Posterior cingulate gyrus (tissue), 11 donors: ENCODE measurements at regions of chr10 and their contacts with region 1.

Region 1: DNA sequence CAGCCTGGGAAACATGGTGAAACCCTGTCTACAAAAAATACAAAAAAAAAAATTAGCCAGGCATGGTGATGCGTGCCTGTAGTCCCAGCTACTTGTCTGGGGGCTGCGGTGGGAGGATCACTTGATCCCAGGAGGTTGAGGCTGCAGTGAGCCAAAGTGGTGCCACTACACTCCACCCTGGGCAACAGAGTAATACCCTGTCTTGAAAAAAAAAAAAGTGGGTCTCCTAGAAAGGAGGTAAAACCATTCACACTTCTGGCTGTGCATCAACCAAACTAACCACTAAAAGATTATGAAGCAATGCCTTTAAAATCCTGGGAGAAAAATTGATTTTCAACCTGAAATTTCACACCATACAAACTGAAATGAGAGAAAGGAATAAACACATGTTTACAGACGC is 35.4 kb upstream of the C10orf71 start:
- DNase-seq: no peak

Region 2: DNA sequence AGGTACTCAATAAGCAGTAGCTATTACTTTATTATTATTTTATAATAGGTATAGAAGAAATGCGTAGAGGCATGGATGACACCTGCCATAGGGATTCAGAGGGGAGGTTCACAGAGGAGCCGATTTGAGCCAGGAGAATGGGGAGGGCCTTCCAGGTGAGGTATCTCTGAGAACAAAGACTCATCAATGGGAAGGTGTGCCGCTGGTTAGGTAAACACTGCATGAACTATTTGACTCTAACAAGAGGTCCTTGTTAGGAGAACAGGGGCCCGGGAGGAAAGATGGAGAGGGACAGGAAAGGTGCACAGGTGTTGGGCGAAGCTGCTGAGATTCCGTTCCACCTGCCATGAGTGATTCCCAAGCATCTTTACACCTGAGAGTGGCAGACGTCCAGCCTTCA is 33.6 kb before region 1 on chr10:
- intact Hi-C with region 1: loop called (anchors 2 kb)
- DNase-seq: no peak

Region 3: GRCh38 chr10:49350846-49351532 is 87.4 kb after region 1 on chr10:
- intact Hi-C with region 1: no loop called
- DNase-seq: no peak